Cardiac septum (tissue), 1 donor: ENCODE measurements at regions of chr4 and their contacts with region 1.

Region 1: GRCh38 chr4:123396307-123397143 is at the start of gene SPRY1:
- DNase-seq: peak; percentile 94
- total RNA-seq, gene SPRY1: 50.9 TPM

Region 2: DNA sequence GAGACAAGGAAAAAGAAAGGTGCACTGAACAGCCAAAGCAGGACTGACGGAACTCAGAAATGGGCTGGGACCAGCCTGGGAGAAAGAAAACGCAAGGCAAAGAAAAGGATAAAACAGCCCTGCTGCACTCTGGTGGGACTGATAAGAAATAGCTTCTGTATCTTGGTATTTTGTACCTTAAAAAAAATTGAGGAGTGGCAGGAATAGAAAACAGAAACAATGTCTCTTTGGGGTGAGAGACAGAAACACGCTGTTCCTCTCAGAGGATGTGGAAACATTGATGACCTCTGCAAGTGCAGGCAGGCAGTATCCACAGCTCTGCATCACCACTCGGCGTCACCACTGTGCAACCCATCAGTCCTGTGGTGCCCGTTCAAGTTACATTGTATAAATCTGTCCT is 152.4 kb before region 1 on chr4:
- intact Hi-C with region 1: loop called (anchors 2 kb)
- DNase-seq: peak; percentile 81

Region 3: GRCh38 chr4:123461996-123462395 is 65.5 kb after region 1 on chr4:
- intact Hi-C with region 1: no loop called
- DNase-seq: no peak

Region 4: GRCh38 chr4:123661080-123661737 is 264.7 kb after region 1 on chr4:
- intact Hi-C with region 1: loop called (anchors 5 kb)
- DNase-seq: no peak

Region 5: GRCh38 chr4:123785538-123785937 is 389.0 kb after region 1 on chr4:
- intact Hi-C with region 1: loop called (anchors 10 kb)
- DNase-seq: no peak

Region 6: GRCh38 chr4:123986268-123986798 is 589.8 kb after region 1 on chr4:
- intact Hi-C with region 1: loop called (anchors 5 kb)
- DNase-seq: no peak